ENCODE measurements at regions of chr14 and their contacts with region 1.

Region 1: DNA sequence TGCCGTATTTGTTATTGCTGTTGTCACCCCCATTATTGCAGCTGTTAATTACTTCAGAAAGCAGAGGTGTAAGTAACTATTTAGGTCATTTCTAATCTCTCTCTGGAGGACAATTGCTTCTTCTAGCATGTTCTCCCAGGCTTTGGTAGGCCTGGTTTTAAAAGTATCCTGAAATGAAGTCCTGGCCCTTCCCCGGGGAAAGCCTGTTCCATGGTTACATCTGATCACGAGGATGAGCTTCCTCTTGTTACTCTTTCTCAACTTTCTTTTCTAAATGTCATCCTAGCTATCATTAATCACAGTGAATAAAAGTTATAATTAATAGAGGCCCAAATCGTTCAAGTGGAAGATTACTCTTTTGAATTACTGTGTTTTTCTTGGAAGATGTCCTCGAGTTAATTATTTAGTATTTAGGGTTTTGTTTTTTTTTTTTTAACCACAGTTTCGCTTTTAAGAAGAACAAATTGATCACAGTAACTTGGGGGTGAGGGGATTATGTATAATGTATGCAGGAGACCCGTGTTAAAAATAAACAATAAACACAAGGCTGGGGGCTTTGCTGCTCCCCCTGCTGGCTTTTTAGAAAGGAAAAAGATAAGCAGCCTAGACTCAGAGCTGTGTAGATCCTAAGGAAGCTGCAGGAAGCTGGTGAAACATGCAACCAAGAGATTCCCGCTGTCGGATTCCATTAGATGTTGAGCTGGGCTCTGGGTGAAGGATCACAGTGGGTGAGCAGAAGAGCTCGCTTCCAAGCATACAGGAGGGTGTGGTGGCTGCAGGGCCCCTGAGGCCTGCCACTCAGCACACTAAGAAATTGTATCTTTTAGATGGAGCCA is 420.1 kb downstream of the FUT8 start:
- DNase-seq: peak; percentile 18
- H3K4me3 ChIP-seq: no peak overlapping the region
- H3K27ac ChIP-seq: no peak overlapping the region
- H3K4me1 ChIP-seq: no peaks in the 10 kb centered on the region
- H3K27me3 ChIP-seq: peaks cover 11% of the 10 kb centered on the region
- CTCF ChIP-seq: peak; percentile 43; the same call in 1 of the 2 replicates

Region 2: DNA sequence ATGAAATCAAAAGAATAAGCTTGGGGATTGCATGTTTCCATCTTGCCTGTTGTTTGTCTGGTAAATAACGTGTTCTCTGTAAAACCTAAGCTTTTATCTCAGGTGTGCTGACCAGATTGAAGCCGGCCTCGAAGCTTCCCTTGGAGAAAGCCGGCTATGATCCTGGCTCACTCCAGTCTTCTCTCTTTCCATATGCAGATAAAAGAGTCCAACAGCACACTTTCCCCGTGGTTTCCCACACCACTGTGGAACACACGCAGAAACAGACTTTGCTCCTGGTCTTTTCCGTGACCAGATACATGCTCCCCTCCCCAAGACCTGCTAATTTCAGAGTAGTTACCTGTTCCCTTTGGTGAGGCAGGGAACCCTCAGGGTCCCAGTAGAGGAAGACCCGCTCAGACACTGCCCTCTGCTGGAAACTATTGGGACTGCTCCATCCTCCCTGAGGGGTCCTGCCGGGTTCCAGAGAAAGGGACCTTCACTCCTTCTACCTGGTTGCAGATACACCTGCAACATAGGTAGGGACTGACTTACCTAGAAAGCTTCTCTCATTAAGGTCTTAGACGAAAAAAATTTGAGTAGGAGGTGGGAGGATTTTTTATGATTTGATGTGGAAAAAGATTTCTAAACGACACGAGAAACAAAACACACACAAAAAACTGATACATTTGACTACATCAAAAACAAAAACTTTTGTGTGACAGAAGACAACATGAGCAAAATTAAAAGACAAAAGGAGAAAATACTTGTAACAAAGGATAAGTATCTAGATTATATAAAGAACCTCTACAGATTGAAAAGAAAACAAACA is 238.1 kb after region 1 on chr14:
- CTCF ChIA-PET with region 1: no interaction called
- POLR2A ChIA-PET with region 1: no interaction called
- intact Hi-C with region 1: loop called (anchors 10 kb)
- DNase-seq: peak; percentile 50
- H3K4me3 ChIP-seq: no peak overlapping the region
- H3K27ac ChIP-seq: no peak overlapping the region
- H3K4me1 ChIP-seq: no peaks in the 10 kb centered on the region
- H3K27me3 ChIP-seq: no peaks in the 10 kb centered on the region
- CTCF ChIP-seq: peak; percentile 90

Region 3: GRCh38 chr14:66342429-66342828 is 509.8 kb after region 1 on chr14:
- CTCF ChIA-PET with region 1: no interaction called
- POLR2A ChIA-PET with region 1: no interaction called
- intact Hi-C with region 1: no loop called
- DNase-seq: no peak
- H3K4me3 ChIP-seq: no peak overlapping the region
- H3K27ac ChIP-seq: no peak overlapping the region
- H3K4me1 ChIP-seq: no peaks in the 10 kb centered on the region
- H3K27me3 ChIP-seq: no peaks in the 10 kb centered on the region
- CTCF ChIP-seq: no peak

Measured in A673 (cell line).